A673 (cell line): ENCODE measurements at regions of chr18 and their contacts with region 1.

Region 1: DNA sequence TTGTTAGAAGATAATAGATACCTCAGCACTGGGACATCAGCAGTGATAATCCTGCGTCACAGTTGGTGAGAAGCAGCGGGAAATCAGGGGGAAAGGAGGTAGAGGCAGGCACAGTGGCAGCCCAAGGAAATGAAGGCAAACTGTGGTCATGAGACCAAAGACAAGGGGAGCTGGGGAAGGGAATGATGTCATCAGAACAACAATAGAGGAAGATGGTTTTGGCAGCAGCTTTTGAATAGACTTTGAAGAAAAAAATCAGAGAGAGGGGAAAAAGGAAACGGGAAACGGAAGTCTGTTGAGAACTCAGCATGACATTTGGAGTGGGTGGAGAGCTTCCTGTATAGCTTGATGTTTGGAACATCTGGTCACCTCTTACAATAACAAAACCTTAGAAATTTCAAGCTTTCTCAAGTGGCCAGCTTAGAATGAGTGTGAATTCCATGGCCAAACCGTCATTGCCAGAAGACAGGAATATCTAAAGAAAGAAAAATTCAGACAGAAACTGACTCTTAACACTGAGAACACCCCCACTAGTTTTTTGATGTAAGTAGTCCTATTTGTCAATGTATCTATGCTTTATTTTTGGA is 18.4 kb upstream of the YES1 start:
- DNase-seq: peak; percentile 99
- H3K4me3 ChIP-seq: peak overlapping the region; percentile 29
- H3K27ac ChIP-seq: peak overlapping the region; percentile 98
- H3K4me1 ChIP-seq: peaks cover 33% of the 10 kb centered on the region
- H3K27me3 ChIP-seq: no peaks in the 10 kb centered on the region
- CTCF ChIP-seq: no peak

Region 2: DNA sequence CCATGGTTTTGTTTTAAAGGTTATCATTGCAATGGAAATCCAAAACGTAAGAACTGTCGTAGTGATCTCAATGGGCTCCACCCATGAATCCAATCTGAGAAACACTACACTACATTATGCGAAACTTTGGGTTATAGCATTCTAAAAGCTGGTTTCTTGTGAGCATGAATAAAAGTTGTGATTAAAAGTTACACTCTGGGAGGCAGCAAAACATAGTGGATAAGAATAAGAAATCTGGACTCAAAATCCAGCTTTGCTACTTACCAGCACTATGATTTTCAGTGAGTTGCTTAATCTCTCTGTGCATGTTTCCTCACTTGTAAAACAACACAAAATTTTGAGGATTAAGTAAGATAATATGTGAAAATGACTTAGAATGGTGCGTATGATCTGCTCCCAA is 536.9 kb before region 1 on chr18:
- CTCF ChIA-PET with region 1: no interaction called
- POLR2A ChIA-PET with region 1: no interaction called
- intact Hi-C with region 1: loop called (anchors 5 kb)
- DNase-seq: no peak
- H3K4me3 ChIP-seq: no peak overlapping the region
- H3K27ac ChIP-seq: no peak overlapping the region
- H3K4me1 ChIP-seq: no peaks in the 10 kb centered on the region
- H3K27me3 ChIP-seq: no peaks in the 10 kb centered on the region
- CTCF ChIP-seq: no peak

Region 3: GRCh38 chr18:623761-624620 is 206.4 kb before region 1 on chr18:
- CTCF ChIA-PET with region 1: interaction called, 36 read pairs
- POLR2A ChIA-PET with region 1: no interaction called
- intact Hi-C with region 1: loop called (anchors 1 kb)
- DNase-seq: peak; percentile 72
- H3K4me3 ChIP-seq: no peak overlapping the region
- H3K27ac ChIP-seq: no peak overlapping the region
- H3K4me1 ChIP-seq: peaks cover 14% of the 10 kb centered on the region
- H3K27me3 ChIP-seq: no peaks in the 10 kb centered on the region
- CTCF ChIP-seq: peak; percentile 75

Region 4: DNA sequence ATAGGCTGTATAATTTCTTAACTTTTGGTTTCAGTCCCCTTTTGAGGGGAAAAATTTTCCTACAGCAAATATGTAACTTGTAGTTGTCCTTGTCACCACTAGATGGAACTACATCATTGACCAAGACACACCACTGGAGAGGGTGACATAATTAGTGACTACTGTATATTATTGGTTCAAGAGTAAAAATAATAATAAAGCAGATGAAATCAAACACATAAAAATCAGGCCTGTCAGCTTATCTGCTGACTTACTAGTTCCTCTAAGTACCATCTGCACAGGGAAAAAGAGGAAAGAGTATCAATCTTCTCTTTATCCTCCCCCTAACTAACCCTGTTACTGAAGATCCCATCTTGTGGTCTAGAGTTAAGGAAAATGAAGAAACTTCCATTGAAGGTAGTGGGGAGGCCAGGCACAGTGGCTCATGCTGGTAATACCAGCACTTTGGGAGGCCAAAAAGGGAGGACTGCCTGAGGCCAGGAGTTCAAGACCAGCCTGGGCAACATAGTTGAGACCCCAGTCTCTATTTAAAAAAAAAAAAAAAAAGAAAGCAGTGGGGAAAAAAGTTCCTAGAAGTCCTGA is 88.4 kb before region 1 on chr18:
- CTCF ChIA-PET with region 1: interaction called, 10 read pairs
- POLR2A ChIA-PET with region 1: interaction called, 3 read pairs
- intact Hi-C with region 1: loop called (anchors 1 kb)
- DNase-seq: peak; percentile 73
- H3K4me3 ChIP-seq: no peak overlapping the region
- H3K27ac ChIP-seq: no peak overlapping the region
- H3K4me1 ChIP-seq: peaks cover 14% of the 10 kb centered on the region
- H3K27me3 ChIP-seq: no peaks in the 10 kb centered on the region
- CTCF ChIP-seq: peak; percentile 80

Region 5: DNA sequence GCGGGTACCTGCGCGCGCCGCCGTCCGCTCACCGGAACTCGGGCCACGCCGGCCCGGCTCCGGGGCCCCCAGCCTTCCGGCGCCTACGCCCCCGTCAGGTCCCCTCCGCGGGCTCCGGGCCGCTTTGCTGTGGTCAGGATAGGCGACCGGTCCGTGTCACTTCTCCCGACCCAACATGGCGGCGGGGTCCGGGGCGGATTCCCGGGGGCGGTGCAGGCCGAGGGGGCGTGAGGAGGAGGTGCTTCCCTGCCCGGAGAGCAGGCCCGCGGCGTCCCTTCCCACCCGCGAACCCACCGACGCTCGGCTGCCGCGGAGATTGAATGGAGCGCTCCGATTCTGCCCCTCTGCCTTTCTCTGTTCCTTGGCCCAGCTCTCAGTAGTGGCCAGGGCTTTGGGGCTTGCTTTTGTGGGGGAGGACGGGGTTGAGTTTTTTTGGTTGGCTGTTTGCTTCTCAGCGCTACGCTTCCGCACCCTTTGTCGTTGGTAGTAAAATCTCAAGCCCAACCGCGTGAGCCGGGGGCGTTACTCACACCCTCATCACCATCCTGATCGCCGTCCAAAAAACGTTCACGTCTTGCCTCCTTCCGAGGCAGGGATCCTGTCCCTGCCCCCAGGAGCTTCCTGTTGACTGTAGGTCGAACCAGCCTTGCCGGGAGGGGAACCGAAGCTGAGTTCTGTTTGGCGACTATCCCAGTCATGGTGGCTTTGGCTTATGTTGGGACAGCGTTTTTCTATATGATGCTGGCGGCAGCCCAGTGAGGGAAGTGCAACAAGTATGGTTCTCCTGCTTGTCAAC is 17.8 kb before region 1 on chr18:
- CTCF ChIA-PET with region 1: interaction called, 3 read pairs
- POLR2A ChIA-PET with region 1: interaction called, 4 read pairs
- intact Hi-C with region 1: loop called (anchors 1 kb)
- DNase-seq: peak; percentile 92
- H3K4me3 ChIP-seq: peak overlapping the region; percentile 99
- H3K27ac ChIP-seq: peak overlapping the region; percentile 89
- H3K4me1 ChIP-seq: peaks cover 12% of the 10 kb centered on the region
- H3K27me3 ChIP-seq: no peaks in the 10 kb centered on the region
- CTCF ChIP-seq: no peak